ENCODE measurements at regions of chr7 and their contacts with region 1.

Region 1: GRCh38 chr7:136405931-136406777 is 429.0 kb upstream of the MTPN start:
- ATAC-seq: peak; percentile 70 to 97 (median 90)
- H3K4me3 ChIP-seq: no peak overlapping the region
- H3K27ac ChIP-seq: no peak overlapping the region
- H3K4me1 ChIP-seq: peaks cover 0 to 6% of the 10 kb centered on the region in 2 donors

Region 2: GRCh38 chr7:135855846-135856245 is 550.3 kb before region 1 on chr7:
- in situ Hi-C with region 1: no loop called
- ATAC-seq: peak; percentile 42 to 86 (median 72)
- H3K4me3 ChIP-seq: no peak overlapping the region
- H3K27ac ChIP-seq: no peak overlapping the region
- H3K4me1 ChIP-seq: peaks cover 3% of the 10 kb centered on the region in 2 donors

Region 3: GRCh38 chr7:136687693-136688322 is 281.7 kb after region 1 on chr7:
- in situ Hi-C with region 1: loop called in 1 of 9 experiments (anchors 25 kb)
- ATAC-seq: peak in 3 of 8 experiments; percentile 51 to 59 (median 57)
- H3K4me3 ChIP-seq: no peak overlapping the region
- H3K27ac ChIP-seq: no peak overlapping the region
- H3K4me1 ChIP-seq: peaks cover 0 to 5% of the 10 kb centered on the region in 2 donors

Region 4: DNA sequence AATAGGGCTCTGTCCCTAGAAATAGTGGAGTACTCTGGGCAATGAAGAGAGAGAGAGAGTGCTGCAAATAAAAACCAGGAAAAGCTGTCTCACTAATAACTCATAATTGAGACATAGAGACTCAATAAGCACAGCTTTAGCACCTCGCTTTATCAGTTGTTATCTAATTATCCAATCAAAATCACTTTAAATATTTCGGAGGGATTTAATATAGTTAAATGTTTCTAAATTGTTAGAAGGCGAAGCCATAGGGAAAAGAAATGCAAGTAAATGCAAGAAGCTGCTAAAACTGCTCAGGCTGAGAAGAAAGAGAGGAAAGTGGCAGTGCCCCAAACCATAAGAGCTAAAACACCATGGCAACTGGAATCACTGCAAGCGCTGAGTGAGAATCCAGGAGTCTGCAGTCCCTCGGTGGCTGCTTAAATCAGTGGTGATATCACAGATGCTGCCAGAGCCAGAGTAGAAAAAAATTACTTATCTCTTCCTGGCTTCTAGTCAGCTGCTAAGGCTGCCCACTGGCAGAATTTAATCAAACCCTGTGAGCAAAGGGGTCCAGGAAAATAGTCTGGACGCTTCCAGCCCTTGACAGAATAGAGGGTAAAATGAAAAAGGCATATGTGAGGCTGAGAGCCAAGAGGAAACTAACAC is 311.9 kb after region 1 on chr7:
- in situ Hi-C with region 1: loop called in 1 of 9 experiments (anchors 25 kb)
- ATAC-seq: peak in 1 of 8 experiments; percentile 16
- H3K4me3 ChIP-seq: no peak overlapping the region
- H3K27ac ChIP-seq: no peak overlapping the region
- H3K4me1 ChIP-seq: peaks cover 0 to 3% of the 10 kb centered on the region in 2 donors

Measured in motor neuron (in vitro differentiated cells).